Endothelial cell of umbilical vein (primary cell): ENCODE measurements at regions of chr20 and their contacts with region 1.

Region 1: GRCh38 chr20:5397393-5397792 is 80.6 kb upstream of the PROKR2 start:
- DNase-seq: no peak
- H3K4me3 ChIP-seq: no peak overlapping the region
- H3K27ac ChIP-seq: no peak overlapping the region
- H3K4me1 ChIP-seq: no peaks in the 10 kb centered on the region
- H3K27me3 ChIP-seq: no peaks in the 10 kb centered on the region
- CTCF ChIP-seq: no peak
- POLR2A ChIP-seq: no peak

Region 2: DNA sequence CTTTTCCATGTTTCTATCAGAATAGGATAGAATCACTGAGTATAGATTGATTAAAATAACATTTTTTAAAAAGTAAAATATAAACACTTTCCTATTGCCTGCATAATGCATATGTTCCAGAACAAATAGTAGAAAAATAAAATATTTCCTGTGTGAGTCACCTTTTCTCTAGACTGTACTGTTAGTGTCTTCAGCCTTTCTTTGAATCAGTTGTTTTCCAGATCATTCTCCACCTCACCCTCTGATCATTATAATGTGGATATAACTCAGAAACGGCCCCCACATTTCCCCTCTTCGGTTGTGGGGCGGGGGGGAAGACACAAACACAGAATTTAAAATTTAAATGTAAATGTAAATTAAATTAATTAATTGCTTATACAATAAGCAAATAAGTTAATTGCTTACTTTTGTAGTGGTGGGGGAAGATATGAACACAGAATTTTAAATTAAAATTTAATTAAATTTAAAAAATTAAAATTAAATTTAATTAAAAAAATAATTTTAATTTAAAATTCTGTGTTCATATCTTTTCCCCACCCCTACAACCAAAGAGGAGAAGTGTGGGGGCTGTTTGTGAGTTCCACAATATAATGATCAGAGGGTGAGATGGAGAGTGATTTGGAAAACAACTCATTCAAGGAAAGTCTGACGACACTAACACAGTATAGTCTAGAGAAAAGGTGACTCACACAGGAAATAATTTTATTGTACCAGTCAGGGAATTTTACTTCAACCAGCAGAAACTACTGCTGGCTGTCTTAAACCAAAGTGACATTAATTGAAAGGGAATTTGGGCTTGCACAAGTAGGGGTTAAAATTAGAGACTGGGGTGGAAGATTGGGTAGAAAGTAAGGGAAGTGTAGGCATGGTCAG is 43.5 kb before region 1 on chr20:
- CTCF ChIA-PET with region 1: interaction called, 6 read pairs
- POLR2A ChIA-PET with region 1: no interaction called
- dilution Hi-C with region 1: no loop called
- intact Hi-C with region 1: loop called (anchors 10 kb)
- DNase-seq: peak; percentile 88
- H3K4me3 ChIP-seq: peak overlapping the region in 1 of 3 experiments; percentile 25
- H3K27ac ChIP-seq: peak overlapping the region; percentile 92
- H3K4me1 ChIP-seq: peaks cover 30% of the 10 kb centered on the region
- H3K27me3 ChIP-seq: no peaks in the 10 kb centered on the region
- CTCF ChIP-seq: no peak
- POLR2A ChIP-seq: no peak